Activated naive CD4-positive, alpha-beta T cell treated with anti-CD3 and anti-CD28 coated beads for 36 hours (primary cell): ENCODE measurements at regions of chr7 and their contacts with region 1.

Region 1: GRCh38 chr7:30164567-30164966 is 29.8 kb downstream of the MTURN start:
- DNase-seq: no peak
- H3K4me3 Mint-ChIP-seq: no peak overlapping the region
- H3K27ac Mint-ChIP-seq: peak overlapping the region; percentile 14
- H3K4me1 Mint-ChIP-seq: peaks cover 32% of the 10 kb centered on the region
- H3K27me3 Mint-ChIP-seq: no peaks in the 10 kb centered on the region

Region 2: DNA sequence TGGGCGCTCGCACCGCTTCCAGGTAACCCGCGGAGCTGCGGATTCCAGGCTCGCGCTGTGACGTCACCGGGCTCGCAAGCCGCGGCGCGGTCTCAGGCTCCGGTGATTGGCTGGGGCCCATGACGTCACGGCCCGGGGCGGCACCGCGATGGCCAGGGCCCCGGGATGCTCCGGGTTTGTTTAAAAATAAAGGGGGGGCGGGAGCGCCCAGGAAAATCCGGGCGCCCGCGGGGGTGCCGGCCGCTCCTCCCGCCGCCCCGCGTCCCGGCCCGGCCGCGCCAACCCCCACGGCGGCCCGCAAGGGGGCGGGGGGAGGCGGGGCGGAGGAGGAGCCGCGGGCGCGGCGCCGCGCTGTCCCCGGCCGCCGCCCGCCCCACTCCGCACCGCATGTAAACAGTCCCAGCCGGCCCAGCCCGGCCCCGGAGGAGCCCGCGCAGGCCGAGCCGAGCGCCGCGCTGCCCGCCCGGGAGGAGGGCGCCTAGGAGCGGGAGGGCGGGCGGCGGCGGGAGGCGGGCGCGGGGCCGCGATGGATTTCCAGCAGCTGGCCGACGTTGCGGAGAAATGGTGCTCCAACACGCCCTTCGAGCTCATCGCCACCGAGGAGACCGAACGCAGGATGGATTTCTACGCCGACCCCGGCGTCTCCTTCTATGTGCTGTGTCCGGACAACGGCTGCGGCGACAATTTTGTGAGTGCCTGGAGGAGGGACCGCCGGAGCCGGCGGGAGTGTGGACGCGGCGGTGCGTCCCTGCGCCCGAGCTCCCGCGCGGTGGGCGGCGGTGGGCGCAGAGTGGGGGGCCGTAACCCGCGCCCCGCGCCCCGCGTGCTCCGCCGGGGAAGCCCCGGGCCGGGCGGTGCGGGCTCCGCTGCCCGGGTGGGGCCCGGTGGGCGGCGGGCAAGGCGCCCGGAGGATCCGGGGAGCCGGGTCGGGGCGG is 29.7 kb before region 1 on chr7 and contains the start of gene MTURN:
- CTCF ChIA-PET with region 1: interaction called, 3 read pairs
- intact Hi-C with region 1: loop called (anchors 1 kb)
- DNase-seq: peak; percentile 83
- H3K4me3 Mint-ChIP-seq: peak within 1 kb of the TSS; percentile 87
- H3K27ac Mint-ChIP-seq: peak within 1 kb of the TSS; percentile 56
- H3K4me1 Mint-ChIP-seq: no peaks in the 10 kb centered on the region
- H3K27me3 Mint-ChIP-seq: no peaks in the 10 kb centered on the region
- total RNA-seq, gene MTURN: 5.1 to 6.3 TPM

Region 3: DNA sequence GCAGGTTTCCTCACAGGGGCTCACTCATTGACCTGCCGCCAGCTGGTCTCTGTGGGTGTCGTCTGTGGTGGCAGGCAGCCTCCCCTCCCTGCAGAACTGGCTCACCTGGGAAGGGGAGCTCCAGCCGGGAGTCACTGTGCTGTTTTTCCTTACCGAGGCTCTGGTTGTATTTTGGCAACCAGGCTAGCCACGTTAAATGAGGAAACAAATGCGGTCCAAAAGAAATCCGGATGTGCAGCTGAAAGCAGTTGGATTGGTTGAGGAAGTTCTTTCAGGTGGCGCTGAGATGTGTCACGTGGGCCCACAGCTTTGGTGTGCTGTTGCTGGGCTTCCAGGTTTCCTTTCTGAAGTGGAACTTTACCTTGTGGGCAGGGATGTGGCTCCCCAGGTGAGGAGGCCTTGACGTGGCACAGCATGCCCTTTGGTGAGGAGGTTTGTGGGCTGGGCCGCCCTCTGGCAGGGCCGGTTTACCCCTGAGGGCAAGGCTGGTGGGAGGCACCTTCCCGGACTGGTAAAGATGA is 15.6 kb before region 1 on chr7:
- CTCF ChIA-PET with region 1: no interaction called
- intact Hi-C with region 1: loop called (anchors 1 kb)
- DNase-seq: peak; percentile 69
- H3K4me3 Mint-ChIP-seq: peak overlapping the region; percentile 49
- H3K27ac Mint-ChIP-seq: peak overlapping the region; percentile 21
- H3K4me1 Mint-ChIP-seq: no peaks in the 10 kb centered on the region
- H3K27me3 Mint-ChIP-seq: no peaks in the 10 kb centered on the region

Region 4: DNA sequence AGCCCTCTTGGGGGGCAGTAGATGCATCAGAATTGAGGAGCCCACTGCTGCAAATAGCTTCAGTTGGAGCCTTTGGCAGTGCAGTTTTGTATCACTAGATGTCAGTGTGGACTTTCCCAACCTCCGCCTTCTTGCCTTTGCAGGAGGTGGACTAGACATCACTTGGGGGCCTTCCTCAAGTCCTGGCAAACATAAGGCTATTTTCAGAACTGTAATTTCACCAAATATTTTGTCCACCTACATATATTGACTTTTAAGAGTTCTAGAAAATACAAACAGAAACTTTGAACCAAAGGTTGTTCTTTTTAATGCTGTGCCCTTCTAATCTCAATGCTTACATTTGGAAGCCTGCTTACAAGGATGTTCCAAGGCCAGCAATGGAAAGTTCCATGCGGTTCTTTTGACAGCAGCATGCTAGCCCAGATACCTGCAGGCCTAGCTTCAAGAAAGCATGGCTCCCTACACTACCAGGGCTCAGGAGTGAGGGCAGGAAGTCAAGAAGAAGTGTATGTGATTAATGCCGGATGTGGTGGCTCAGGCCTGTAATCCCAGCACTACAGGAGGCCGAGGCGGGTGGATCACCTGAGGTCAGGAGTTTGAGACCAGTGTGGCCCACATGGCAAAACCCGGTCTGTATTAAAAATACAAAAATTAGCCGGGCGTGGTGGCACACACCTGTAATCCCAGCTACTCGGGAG is 111.8 kb after region 1 on chr7:
- CTCF ChIA-PET with region 1: interaction called, 5 read pairs
- intact Hi-C with region 1: loop called (anchors 2 kb)
- DNase-seq: peak; percentile 75
- H3K4me3 Mint-ChIP-seq: no peak overlapping the region
- H3K27ac Mint-ChIP-seq: no peak overlapping the region
- H3K4me1 Mint-ChIP-seq: peaks cover 5% of the 10 kb centered on the region
- H3K27me3 Mint-ChIP-seq: no peaks in the 10 kb centered on the region

Region 5: GRCh38 chr7:30412810-30413504 is 248.4 kb after region 1 on chr7:
- CTCF ChIA-PET with region 1: interaction called, 3 read pairs
- intact Hi-C with region 1: loop called (anchors 2 kb)
- DNase-seq: peak; percentile 10
- H3K4me3 Mint-ChIP-seq: no peak overlapping the region
- H3K27ac Mint-ChIP-seq: no peak overlapping the region
- H3K4me1 Mint-ChIP-seq: no peaks in the 10 kb centered on the region
- H3K27me3 Mint-ChIP-seq: no peaks in the 10 kb centered on the region

Region 6: DNA sequence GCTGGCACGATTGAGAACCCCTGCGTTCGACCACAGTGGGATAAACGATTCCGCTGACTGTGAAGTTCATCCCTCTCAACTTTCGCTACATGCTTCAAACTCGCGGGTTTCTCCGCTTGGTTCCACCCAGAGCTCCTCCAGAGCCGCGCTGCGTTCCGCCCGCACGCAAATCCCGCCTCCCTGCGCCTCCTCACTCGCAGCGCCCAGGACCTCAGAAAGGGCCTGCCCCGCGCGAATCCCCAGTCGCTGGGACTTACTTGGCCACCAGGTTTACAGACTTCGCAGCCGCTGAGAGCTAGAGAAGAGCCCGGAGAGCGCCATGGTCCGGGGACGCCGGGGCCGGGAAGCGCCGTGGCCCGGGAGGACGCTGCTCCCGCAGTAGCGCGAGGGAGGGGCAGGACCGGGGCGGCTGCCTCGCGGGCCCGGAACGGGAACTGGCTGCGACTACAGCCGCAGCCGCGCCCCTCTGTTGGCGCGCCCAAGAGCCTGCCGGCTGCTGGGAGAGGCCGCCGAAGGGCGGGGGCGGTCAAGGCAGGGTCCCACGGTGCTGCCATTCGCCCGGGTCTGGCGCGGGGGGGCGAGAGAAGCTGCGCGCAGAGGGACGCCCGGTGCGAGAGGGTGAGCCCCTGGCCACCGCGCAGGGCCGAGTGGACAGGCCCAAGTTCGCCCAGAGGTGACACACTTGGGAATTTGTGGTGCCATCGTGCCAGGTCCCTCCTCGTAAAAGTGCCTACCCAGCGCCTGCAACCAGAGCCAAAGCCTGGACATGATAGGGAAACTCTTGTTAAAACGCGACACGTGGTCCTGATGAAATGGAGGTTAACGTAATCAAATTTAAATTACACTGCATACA is 314.0 kb after region 1 on chr7 and contains the start of gene NOD1:
- CTCF ChIA-PET with region 1: no interaction called
- intact Hi-C with region 1: loop called (anchors 10 kb)
- DNase-seq: peak; percentile 73
- H3K4me3 Mint-ChIP-seq: peak within 1 kb of the TSS; percentile 89
- H3K27ac Mint-ChIP-seq: peak within 1 kb of the TSS; percentile 87
- H3K4me1 Mint-ChIP-seq: peaks cover 52% of the 10 kb centered on the region
- H3K27me3 Mint-ChIP-seq: no peaks in the 10 kb centered on the region
- total RNA-seq, gene NOD1: 9.2 to 9.8 TPM

Region 7: DNA sequence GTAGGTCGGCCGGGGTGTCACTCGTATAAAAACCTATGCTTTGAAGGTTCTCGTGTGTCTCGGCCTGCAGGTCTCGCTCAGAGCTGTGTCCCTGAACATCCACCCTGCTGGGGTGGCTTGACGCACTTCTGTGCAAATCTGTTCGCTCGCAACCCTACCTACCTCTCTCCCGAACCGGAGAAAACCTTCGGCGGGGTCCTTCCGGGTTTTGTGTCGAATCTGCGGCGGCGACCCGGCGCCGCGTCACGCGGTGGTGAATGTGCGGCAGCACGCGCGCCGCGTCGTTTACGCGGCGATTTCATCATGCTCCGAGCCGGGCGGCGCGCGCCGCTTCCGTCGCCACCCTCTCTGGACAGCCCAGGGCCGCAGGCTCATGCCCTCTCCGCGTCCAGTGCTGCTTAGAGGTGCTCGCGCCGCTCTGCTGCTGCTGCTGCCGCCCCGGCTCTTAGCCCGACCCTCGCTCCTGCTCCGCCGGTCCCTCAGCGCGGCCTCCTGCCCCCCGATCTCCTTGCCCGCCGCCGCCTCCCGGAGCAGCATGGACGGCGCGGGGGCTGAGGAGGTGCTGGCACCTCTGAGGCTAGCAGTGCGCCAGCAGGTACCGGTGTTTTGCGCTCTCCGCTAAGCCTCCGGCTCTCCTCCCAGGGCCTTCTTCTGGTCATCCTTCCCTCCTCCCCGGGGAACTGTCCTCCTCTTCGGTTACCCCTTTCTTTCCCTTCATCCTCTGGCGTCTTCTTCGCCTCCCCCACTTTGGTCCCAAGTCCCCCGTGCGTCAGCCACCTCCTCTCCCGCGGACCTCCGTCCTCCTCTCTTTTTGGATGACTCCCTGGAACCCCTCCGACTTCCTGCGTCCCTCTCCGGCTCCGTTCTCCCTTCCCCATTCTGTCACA is 430.2 kb after region 1 on chr7 and contains the start of gene GARS1:
- CTCF ChIA-PET with region 1: no interaction called
- intact Hi-C with region 1: loop called (anchors 10 kb)
- DNase-seq: peak; percentile 88
- H3K4me3 Mint-ChIP-seq: peak within 1 kb of the TSS; percentile 96
- H3K27ac Mint-ChIP-seq: peak within 1 kb of the TSS; percentile 97
- H3K4me1 Mint-ChIP-seq: peaks cover 49% of the 10 kb centered on the region
- H3K27me3 Mint-ChIP-seq: no peaks in the 10 kb centered on the region
- total RNA-seq, gene GARS1: 367 to 385 TPM